Natural killer cell (primary cell): ENCODE measurements at regions of chr4 and their contacts with region 1.

Region 1: GRCh38 chr4:128809477-128810330 is at the start of gene JADE1:
- DNase-seq: peak; percentile 81 to 95
- ATAC-seq: peak; percentile 59 to 85 (median 67)
- H3K4me3 ChIP-seq: peak within 1 kb of the TSS; percentile 84
- H3K4me3 Mint-ChIP-seq: peak within 1 kb of the TSS; percentile 99
- H3K27ac ChIP-seq: peak within 1 kb of the TSS; percentile 86
- H3K27ac Mint-ChIP-seq: peak within 1 kb of the TSS; percentile 90 to 95
- H3K4me1 ChIP-seq: peaks cover 10% of the 10 kb centered on the region
- H3K4me1 Mint-ChIP-seq: peaks cover 19 to 22% of the 10 kb centered on the region in 2 donors
- H3K27me3 ChIP-seq: no peaks in the 10 kb centered on the region
- H3K27me3 Mint-ChIP-seq: no peaks in the 10 kb centered on the region
- CTCF ChIP-seq: peak; percentile 36
- total RNA-seq, gene JADE1: 48.9 to 55.8 (median 52.7) TPM

Region 2: GRCh38 chr4:128123036-128123435 is 686.7 kb before region 1 on chr4:
- intact Hi-C with region 1: no loop called
- DNase-seq: no peak
- ATAC-seq: no peak
- H3K4me3 ChIP-seq: no peak overlapping the region
- H3K4me3 Mint-ChIP-seq: no peak overlapping the region
- H3K27ac ChIP-seq: no peak overlapping the region
- H3K27ac Mint-ChIP-seq: no peak overlapping the region
- H3K4me1 ChIP-seq: no peaks in the 10 kb centered on the region
- H3K4me1 Mint-ChIP-seq: no peaks in the 10 kb centered on the region
- H3K27me3 ChIP-seq: no peaks in the 10 kb centered on the region
- H3K27me3 Mint-ChIP-seq: no peaks in the 10 kb centered on the region
- CTCF ChIP-seq: no peak

Region 3: DNA sequence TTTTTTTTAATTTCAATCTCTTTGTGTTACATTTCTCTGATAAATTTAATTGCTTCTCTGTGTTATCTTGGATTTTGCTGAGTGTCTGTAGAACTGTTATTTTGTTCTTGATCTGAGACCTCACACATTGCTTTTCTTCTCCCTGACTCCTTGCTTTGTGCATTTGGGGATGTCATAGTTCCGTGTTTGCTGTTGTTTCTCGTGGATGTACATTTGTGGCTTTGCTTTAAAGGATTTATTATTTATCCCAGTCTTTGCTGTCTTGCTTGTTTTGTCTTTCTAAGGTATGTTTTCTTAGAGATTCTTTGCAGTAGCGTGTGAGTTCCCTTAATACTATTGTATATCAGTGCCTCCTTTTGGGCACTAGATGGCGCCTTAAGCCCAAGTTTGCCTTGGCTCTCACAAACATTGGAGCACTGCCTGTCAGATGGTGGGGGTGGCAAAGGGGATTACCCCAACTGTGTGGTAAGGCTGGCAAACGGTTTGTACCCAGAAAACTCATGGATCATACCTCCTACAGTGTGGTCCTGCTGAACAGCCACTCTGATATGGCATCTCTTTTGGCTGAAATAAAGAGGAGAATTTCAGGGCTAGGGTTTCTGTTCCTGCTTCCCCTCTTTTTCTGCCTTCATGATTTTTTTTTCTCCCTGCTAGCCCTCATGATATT is 618.5 kb before region 1 on chr4:
- intact Hi-C with region 1: loop called (anchors 1 kb)
- DNase-seq: peak; percentile 44 to 87
- ATAC-seq: peak; percentile 92 to 100 (median 100)
- H3K4me3 ChIP-seq: no peak overlapping the region
- H3K4me3 Mint-ChIP-seq: no peak overlapping the region
- H3K27ac ChIP-seq: no peak overlapping the region
- H3K27ac Mint-ChIP-seq: no peak overlapping the region
- H3K4me1 ChIP-seq: no peaks in the 10 kb centered on the region
- H3K4me1 Mint-ChIP-seq: peaks cover 6% of the 10 kb centered on the region in 2 donors
- H3K27me3 ChIP-seq: no peaks in the 10 kb centered on the region
- H3K27me3 Mint-ChIP-seq: no peaks in the 10 kb centered on the region
- CTCF ChIP-seq: peak; percentile 94

Region 4: GRCh38 chr4:128287871-128288688 is 521.6 kb before region 1 on chr4:
- intact Hi-C with region 1: loop called (anchors 1 kb)
- DNase-seq: peak; percentile 97 to 100
- ATAC-seq: peak; percentile 84 to 94 (median 85)
- H3K4me3 ChIP-seq: peak overlapping the region; percentile 87
- H3K4me3 Mint-ChIP-seq: peak overlapping the region; percentile 93
- H3K27ac ChIP-seq: peak overlapping the region; percentile 97
- H3K27ac Mint-ChIP-seq: peak overlapping the region; percentile 85 to 90
- H3K4me1 ChIP-seq: peaks cover 16% of the 10 kb centered on the region
- H3K4me1 Mint-ChIP-seq: peaks cover 34 to 35% of the 10 kb centered on the region in 2 donors
- H3K27me3 ChIP-seq: no peaks in the 10 kb centered on the region
- H3K27me3 Mint-ChIP-seq: peaks cover 0 to 2% of the 10 kb centered on the region in 2 donors
- CTCF ChIP-seq: no peak

Region 5: GRCh38 chr4:128854433-128854832 is 44.7 kb after region 1 on chr4:
- intact Hi-C with region 1: loop called (anchors 2 kb)
- DNase-seq: peak in 1 of 2 donors; percentile 75
- ATAC-seq: peak; percentile 92 to 98 (median 93)
- H3K4me3 ChIP-seq: no peak overlapping the region
- H3K4me3 Mint-ChIP-seq: peak overlapping the region; percentile 85
- H3K27ac ChIP-seq: peak overlapping the region; percentile 68
- H3K27ac Mint-ChIP-seq: peak overlapping the region; percentile 95 to 98
- H3K4me1 ChIP-seq: peaks cover 20% of the 10 kb centered on the region
- H3K4me1 Mint-ChIP-seq: peaks cover 49 to 57% of the 10 kb centered on the region in 2 donors
- H3K27me3 ChIP-seq: no peaks in the 10 kb centered on the region
- H3K27me3 Mint-ChIP-seq: no peaks in the 10 kb centered on the region
- CTCF ChIP-seq: no peak

Region 6: DNA sequence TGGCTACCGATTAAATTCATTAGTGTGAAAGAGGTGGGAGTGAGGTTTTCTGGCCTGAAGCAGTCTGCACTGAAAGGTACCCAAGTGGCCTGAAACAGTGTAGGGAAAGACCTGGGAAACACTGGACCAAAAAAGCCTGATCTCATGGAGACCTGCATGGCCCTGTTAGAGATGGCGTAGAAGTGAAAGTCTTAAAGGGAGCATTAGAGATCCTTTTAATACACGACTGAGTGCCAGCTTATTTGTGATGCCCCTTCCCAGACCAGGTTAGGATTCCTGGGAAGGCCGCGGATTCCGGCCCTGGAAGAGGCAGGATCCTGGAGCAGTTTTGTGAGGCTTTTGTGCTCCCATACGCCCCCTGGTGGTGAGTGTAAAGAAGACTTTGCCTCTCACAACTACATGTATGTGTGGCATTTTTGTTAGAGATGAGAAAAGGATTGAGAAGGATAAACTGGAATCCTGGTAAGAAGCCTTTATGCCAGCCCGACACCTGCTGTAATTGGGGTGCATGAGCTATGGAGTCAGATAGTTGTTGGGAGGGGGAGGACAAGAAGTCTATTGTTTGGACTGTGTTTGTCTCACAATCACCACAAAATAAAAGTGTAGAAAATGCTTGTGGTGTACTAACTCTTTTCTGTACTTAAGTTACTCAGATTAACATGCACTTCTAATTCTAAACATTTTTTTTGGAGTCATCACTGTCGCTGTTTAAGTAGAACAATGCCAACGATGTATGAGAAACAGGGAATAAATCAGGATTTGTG is 53.8 kb after region 1 on chr4:
- intact Hi-C with region 1: loop called (anchors 1 kb)
- DNase-seq: peak; percentile 63 to 86
- ATAC-seq: peak in 2 of 3 donors; percentile 27 to 46
- H3K4me3 ChIP-seq: no peak overlapping the region
- H3K4me3 Mint-ChIP-seq: peak overlapping the region; percentile 58
- H3K27ac ChIP-seq: peak overlapping the region; percentile 44
- H3K27ac Mint-ChIP-seq: peak overlapping the region; percentile 85 to 89
- H3K4me1 ChIP-seq: peaks cover 27% of the 10 kb centered on the region
- H3K4me1 Mint-ChIP-seq: peaks cover 56 to 58% of the 10 kb centered on the region in 2 donors
- H3K27me3 ChIP-seq: no peaks in the 10 kb centered on the region
- H3K27me3 Mint-ChIP-seq: no peaks in the 10 kb centered on the region
- CTCF ChIP-seq: peak; percentile 96

Region 7: DNA sequence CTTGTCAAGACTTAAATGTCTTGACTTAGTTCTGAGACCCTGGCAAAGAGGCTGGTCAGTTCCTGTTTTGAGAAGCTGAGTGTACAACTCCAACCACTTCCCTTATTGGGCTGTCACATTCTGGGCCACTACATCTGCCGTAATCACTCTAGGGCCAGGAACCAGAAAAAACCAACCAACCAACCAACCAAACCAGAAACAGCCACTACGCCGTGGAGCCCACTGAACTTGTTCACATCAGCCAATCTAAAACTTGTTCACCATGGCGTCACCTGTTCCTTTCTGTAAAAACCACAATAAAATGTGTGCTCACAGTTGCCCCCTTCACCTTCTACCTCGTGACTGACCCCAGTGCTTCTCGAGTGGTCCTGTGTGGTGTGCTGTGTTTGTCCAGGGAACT is 107.1 kb after region 1 on chr4:
- intact Hi-C with region 1: loop called (anchors 2 kb)
- DNase-seq: peak; percentile 38 to 57
- ATAC-seq: peak; percentile 83 to 92 (median 89)
- H3K4me3 ChIP-seq: no peak overlapping the region
- H3K4me3 Mint-ChIP-seq: peak overlapping the region; percentile 79
- H3K27ac ChIP-seq: peak overlapping the region; percentile 83
- H3K27ac Mint-ChIP-seq: peak overlapping the region; percentile 73 to 90
- H3K4me1 ChIP-seq: peaks cover 22% of the 10 kb centered on the region
- H3K4me1 Mint-ChIP-seq: peaks cover 68 to 70% of the 10 kb centered on the region in 2 donors
- H3K27me3 ChIP-seq: no peaks in the 10 kb centered on the region
- H3K27me3 Mint-ChIP-seq: no peaks in the 10 kb centered on the region
- CTCF ChIP-seq: no peak

Region 8: GRCh38 chr4:129093191-129093920 is 283.7 kb after region 1 on chr4 and contains the start of gene SCLT1:
- intact Hi-C with region 1: loop called (anchors 2 kb)
- DNase-seq: peak; percentile 96 to 98
- ATAC-seq: peak; percentile 89 to 97 (median 91)
- H3K4me3 ChIP-seq: peak within 1 kb of the TSS; percentile 98
- H3K4me3 Mint-ChIP-seq: no peak within 1 kb of the TSS
- H3K27ac ChIP-seq: peak within 1 kb of the TSS; percentile 100
- H3K27ac Mint-ChIP-seq: no peak within 1 kb of the TSS
- H3K4me1 ChIP-seq: peaks cover 6% of the 10 kb centered on the region
- H3K4me1 Mint-ChIP-seq: peaks cover 27 to 44% of the 10 kb centered on the region in 2 donors
- H3K27me3 ChIP-seq: no peaks in the 10 kb centered on the region
- H3K27me3 Mint-ChIP-seq: no peaks in the 10 kb centered on the region
- CTCF ChIP-seq: no peak
- total RNA-seq, gene SCLT1: 54.0 to 59.9 (median 55.4) TPM